ENCODE measurements at regions of chr10 and their contacts with region 1.

Region 1: DNA sequence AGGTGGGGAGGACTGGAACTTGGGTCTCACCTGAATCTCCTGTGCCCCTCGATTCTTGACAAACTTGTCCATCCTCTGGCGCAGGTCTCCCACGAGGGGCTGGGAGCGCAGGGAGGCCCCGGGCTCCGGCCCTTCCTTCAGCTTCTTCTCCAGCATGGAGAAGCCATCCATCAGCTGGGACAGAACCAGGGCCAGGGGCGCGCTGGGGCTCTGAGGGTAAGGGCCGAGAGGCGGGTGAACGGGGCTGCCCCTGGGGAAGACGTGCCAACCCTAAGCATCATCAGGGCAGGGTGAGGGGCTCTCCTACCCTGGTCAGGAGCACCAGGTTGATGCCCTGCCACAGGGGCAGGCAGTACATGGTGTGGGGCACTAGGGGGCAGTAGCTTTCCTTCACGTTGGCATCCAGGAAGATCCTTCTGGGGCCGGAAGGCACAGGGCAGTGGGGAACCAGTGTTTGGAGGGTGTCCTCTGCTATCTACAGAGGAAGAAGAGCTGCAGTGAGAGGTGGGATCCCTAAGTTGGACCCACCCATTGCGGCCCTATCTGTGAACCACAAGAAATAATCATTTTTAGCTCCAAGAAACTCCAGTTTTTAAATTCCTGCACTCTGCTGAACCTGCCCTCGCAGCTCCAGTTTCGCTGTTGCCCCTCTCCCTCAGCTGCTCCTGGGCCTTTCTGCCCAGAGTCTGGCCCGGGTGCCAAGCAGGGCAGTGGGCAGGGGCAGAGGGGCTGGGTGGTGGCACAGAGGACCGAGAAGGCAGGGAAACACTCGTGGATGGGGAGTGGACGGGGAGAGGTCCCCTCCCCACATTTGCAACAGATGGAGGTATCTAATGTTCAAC is 10.8 kb upstream of the PYROXD2 start:
- DNase-seq: peak; percentile 24
- H3K4me3 ChIP-seq: no peak overlapping the region
- H3K27ac ChIP-seq: no peak overlapping the region
- H3K4me1 ChIP-seq: no peaks in the 10 kb centered on the region
- H3K27me3 ChIP-seq: no peaks in the 10 kb centered on the region
- CTCF ChIP-seq: peak; percentile 88 to 93

Region 2: DNA sequence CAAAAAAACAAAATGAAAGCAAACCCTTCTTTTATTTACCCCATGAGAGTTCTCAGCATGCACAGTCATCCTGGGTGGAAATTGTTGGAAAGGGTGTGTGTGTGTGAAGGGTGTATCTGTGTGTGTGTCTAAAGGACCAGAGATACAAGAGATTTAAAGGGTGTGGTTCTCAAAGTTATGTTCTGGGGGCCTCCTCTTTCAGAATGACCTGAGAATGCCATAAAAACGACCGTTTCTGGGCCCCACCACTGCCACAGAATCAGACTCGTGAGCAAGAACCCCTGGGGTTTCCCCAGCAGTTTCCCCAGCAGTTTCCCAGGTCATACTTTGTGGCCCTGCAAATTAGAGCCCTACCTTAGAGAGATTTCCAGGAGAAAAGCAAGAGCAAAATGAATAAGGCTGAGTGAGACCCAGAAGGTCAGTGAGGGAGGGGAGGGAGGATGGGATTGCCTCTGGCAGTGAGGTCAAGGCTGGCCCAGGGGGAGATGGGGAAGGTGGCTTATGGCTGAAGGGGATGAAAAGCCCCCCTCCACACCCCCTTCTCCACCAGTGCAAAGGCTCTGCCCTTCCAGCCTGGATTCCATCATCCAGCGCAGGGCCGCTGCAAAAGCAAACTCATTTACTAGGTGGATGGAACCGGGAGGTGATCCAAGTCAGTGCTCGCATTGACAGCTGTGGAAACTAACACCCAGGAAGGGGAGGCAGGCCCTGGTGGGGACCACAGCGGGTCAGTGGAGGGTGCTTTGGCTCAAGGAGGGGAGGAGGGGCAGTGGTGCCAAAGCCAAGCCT is 21.0 kb before region 1 on chr10:
- CTCF ChIA-PET with region 1: no interaction called
- dilution Hi-C with region 1: no loop called
- in situ Hi-C with region 1: no loop called
- intact Hi-C with region 1: no loop called
- DNase-seq: peak; percentile 60
- H3K4me3 ChIP-seq: no peak overlapping the region
- H3K27ac ChIP-seq: peak overlapping the region; percentile 22
- H3K4me1 ChIP-seq: peaks cover 12% of the 10 kb centered on the region
- H3K27me3 ChIP-seq: no peaks in the 10 kb centered on the region
- CTCF ChIP-seq: no peak

Region 3: DNA sequence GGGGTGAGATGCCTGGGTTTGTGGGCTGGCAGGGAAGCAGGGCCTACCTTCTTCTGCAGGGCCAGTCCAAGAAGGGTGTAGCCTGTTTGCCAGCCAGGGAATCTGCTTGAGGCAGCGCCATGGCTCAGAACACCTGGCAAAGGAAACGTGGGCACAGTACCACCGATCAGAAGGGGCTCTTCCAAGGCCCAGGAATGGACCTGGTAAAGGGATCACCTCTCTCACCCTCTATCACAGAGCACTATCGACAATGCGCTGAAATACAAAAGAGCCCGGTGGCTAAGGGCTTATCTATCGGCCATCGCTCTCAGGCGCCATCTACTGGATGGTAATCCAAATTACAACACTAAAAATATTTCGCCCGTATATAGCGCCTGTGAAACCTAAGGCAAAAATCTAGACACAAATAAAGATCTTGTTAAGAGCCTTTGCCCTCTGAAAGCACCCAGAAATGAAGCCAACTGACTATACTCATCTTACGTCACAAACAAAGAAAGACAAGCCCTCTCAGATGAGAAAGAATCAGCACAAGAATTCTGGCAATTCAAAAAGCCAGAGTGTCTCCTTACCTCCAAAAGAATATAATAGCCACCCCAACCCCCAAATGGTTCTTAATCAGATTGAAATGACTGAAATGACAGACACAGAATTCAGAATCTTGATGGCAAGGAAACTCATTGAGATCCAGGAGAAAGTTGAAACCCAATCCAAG is 238.8 kb after region 1 on chr10:
- CTCF ChIA-PET with region 1: no interaction called
- dilution Hi-C with region 1: no loop called
- in situ Hi-C with region 1: no loop called
- intact Hi-C with region 1: loop called (anchors 1 kb)
- DNase-seq: peak; percentile 16
- H3K4me3 ChIP-seq: no peak overlapping the region
- H3K27ac ChIP-seq: no peak overlapping the region
- H3K4me1 ChIP-seq: no peaks in the 10 kb centered on the region
- H3K27me3 ChIP-seq: peaks cover 2% of the 10 kb centered on the region
- CTCF ChIP-seq: peak; percentile 59 to 61

Measured in mammary epithelial cell (primary cell).